Activated CD4-positive, alpha-beta memory T cell treated with anti-CD3 and anti-CD28 coated beads for 36 hours (primary cell): ENCODE measurements at regions of chr1 and their contacts with region 1.

Region 1: DNA sequence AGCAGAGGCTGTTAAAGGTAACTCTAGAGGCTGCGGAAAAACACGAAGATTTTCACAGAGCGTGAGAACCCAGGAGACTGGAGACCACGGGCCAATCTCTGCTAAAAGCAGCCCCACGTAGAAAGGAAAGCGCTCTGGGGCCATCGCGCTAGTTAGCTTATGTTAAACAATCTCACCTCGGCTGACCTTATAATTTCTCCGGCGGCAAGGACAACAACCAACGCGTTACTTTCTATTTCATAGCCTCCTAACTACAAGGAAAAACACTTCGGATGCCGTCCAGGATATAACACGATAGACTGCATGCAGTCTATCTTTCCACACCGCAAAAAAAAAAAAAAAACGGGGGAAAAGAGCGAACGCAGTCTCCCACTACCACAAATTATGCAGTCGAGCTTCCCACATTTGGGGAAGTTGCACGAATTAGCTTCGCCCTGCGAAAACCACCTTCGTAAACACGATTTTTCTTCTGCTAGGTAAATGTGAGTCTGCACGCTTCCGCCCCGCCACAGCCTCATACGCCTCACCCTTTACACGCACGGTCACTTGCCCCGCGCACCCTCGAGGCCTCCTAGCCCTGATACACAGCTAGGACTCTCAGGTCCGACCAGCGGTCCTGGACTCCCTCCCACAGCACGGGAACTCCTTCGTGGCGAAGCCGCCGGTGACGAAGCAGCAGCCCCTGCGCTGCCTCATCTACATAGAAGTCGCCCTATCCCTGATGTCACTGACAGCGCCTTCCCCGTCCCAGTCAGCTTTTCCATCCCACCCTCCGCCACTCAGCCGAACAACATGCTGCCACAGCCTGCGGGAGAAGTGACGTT is 87.8 kb downstream of the PRKAB2 start:
- DNase-seq: peak; percentile 94
- H3K4me3 Mint-ChIP-seq: peak overlapping the region; percentile 85
- H3K27ac Mint-ChIP-seq: peak overlapping the region; percentile 100
- H3K4me1 Mint-ChIP-seq: peaks cover 49% of the 10 kb centered on the region
- H3K27me3 Mint-ChIP-seq: peaks cover 37% of the 10 kb centered on the region

Region 2: DNA sequence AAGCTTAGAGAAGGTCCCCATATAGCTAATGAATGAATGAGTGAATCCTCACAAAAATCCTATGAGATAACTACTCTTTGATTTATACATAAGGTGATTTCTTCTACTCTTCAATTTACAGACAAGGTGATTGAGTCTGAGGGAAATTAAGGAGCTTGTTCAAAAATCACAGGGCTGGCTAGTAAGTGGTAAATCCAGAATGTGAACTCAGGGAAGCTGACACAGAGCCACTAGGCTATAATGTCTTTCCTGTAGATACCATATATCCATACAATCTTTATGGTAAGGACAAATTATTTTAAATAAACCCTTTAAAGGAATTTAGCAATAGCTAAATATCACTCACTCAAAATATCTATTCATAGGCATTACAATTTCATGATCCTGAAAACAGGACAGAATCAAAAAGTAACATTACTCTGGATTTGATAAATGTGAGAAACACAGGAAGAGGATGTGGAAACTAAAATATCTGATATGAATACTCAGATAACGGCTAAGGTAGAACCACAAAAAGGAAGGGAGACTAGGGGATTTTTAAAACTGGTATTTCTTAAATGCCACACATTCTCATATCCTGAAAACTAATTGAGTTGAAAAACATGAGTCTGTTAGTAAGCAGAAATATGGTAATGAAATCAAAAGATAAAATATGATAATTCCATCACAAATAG is 38.2 kb before region 1 on chr1:
- CTCF ChIA-PET with region 1: interaction called, 3 read pairs
- POLR2A ChIA-PET with region 1: interaction called, 34 read pairs
- intact Hi-C with region 1: loop called (anchors 1 kb)
- DNase-seq: no peak
- H3K4me3 Mint-ChIP-seq: peak overlapping the region; percentile 58
- H3K27ac Mint-ChIP-seq: peak overlapping the region; percentile 73
- H3K4me1 Mint-ChIP-seq: peaks cover 44% of the 10 kb centered on the region
- H3K27me3 Mint-ChIP-seq: no peaks in the 10 kb centered on the region

Region 3: GRCh38 chr1:147072370-147073061 is 12.0 kb before region 1 on chr1:
- CTCF ChIA-PET with region 1: interaction called, 3 read pairs
- POLR2A ChIA-PET with region 1: interaction called, 12 read pairs
- intact Hi-C with region 1: no loop called
- DNase-seq: peak; percentile 33
- H3K4me3 Mint-ChIP-seq: peak overlapping the region; percentile 71
- H3K27ac Mint-ChIP-seq: peak overlapping the region; percentile 18
- H3K4me1 Mint-ChIP-seq: peaks cover 25% of the 10 kb centered on the region
- H3K27me3 Mint-ChIP-seq: peaks cover 29% of the 10 kb centered on the region

Region 4: DNA sequence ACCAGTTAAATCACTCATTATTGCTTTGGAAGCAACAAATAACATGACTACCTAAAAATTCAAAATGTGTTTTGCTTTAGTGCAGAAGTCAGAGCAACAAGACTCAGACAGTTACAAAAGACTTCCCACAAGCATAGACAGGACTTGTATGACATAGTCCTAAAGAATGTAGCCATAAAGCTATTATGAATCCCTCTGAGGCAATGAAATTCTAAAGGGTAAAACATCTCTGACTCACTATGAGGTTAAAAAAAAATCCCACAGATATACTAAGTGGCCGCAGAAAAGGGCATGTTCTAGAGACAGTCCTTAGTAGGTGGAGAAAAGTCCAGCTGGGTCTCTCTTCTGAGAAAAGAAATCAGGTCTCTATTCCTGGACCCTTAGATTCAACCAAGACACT is 82.9 kb after region 1 on chr1:
- CTCF ChIA-PET with region 1: no interaction called
- POLR2A ChIA-PET with region 1: interaction called, 33 read pairs
- intact Hi-C with region 1: loop called (anchors 1 kb)
- DNase-seq: no peak
- H3K4me3 Mint-ChIP-seq: no peak overlapping the region
- H3K27ac Mint-ChIP-seq: no peak overlapping the region
- H3K4me1 Mint-ChIP-seq: peaks cover 21% of the 10 kb centered on the region
- H3K27me3 Mint-ChIP-seq: no peaks in the 10 kb centered on the region

Region 5: DNA sequence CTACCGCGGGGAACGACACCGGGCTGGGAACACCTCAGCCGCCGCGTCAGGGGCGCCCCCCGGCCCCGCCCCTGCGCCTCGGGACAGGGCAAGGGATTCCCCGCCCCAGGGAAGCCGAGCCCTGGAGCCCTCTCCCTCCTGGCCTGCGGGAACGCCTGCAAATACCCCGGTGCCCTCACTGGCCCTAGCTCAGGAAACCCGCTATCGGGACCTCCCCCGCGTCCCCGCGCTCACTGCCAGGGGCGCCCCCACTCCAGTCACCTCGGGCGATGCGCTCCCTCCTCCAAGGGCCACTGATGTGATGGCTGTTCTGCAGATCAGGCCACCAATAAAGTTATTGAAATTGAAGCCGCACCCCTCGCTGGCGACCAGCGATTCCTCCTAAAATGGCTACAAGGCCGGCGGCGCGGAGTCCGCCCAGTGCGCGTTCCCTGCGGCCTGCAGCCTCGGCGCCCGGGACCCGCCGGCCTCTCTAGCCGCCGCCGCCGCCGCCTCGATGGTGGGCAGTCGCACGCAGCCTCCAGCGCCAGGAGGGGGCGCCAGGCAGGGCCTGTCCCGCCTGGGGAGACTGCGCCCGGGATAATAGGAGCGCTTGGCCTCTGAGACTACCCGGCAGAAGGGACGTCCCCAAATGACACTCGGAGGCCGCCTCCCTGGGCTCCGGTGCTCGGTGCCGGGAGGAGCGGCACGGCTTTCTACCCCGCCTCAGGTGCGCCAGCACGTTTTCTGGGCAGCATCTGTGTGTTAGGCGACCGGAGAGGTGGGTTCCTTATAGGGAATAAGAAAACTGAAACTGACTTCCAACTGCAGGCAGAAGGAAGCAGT is 87.9 kb after region 1 on chr1 and contains the start of gene PRKAB2:
- CTCF ChIA-PET with region 1: interaction called, 3 read pairs
- POLR2A ChIA-PET with region 1: interaction called, 33 read pairs
- intact Hi-C with region 1: loop called (anchors 1 kb)
- DNase-seq: peak; percentile 95
- H3K4me3 Mint-ChIP-seq: peak within 1 kb of the TSS; percentile 99
- H3K27ac Mint-ChIP-seq: peak within 1 kb of the TSS; percentile 99
- H3K4me1 Mint-ChIP-seq: peaks cover 37% of the 10 kb centered on the region
- H3K27me3 Mint-ChIP-seq: no peaks in the 10 kb centered on the region
- total RNA-seq, gene PRKAB2: 7.0 to 7.4 TPM

Region 6: GRCh38 chr1:147242439-147243227 is 158.1 kb after region 1 on chr1 and contains the start of gene CHD1L:
- CTCF ChIA-PET with region 1: interaction called, 11 read pairs
- POLR2A ChIA-PET with region 1: interaction called, 34 read pairs
- intact Hi-C with region 1: loop called (anchors 2 kb)
- DNase-seq: peak; percentile 96
- H3K4me3 Mint-ChIP-seq: peak within 1 kb of the TSS; percentile 90
- H3K27ac Mint-ChIP-seq: peak within 1 kb of the TSS; percentile 77
- H3K4me1 Mint-ChIP-seq: peaks cover 36% of the 10 kb centered on the region
- H3K27me3 Mint-ChIP-seq: no peaks in the 10 kb centered on the region
- total RNA-seq, gene CHD1L: 71.2 to 72.0 TPM

Region 7: DNA sequence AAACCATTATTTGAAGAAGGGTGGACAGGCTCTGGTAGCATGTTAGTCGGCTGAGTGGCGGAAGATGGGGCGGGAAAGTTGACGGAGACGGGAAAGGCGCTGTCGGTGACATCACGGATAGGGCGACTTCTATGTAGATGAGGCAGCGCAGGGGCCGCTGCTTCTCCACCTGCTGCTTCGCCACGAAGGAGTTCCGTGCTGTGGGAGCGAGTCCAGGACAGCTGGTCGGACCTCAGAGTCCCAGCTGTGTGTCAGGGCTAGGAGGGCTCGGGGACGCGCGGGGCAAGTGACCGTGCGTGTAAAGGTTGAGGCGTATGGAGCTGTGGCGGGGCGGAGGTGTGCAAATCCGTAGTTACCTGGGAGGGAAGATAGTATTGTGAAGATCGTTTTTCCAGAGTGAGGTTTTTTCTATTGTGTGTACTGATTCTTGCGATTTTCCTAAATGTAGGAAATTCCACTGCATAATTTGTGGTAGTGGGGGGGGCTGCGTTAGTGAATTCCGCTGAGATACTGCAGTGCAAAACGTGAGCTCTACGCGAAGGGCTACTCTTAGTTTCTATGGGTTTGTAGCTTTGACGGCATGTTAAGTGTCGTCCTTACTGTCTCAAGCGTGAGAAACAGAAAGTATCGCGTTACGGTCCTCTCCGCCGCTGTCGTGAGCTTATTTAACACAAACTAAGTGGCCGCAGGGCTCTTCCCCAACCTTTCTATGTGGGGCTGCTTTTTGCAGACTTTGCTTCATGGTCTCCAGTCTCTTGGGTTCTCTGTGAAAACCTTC is 1178.8 kb after region 1 on chr1:
- CTCF ChIA-PET with region 1: no interaction called
- POLR2A ChIA-PET with region 1: interaction called, 11 read pairs
- intact Hi-C with region 1: no loop called
- DNase-seq: peak; percentile 85
- H3K4me3 Mint-ChIP-seq: peak overlapping the region; percentile 80
- H3K27ac Mint-ChIP-seq: peak overlapping the region; percentile 96
- H3K4me1 Mint-ChIP-seq: peaks cover 19% of the 10 kb centered on the region
- H3K27me3 Mint-ChIP-seq: no peaks in the 10 kb centered on the region